ENCODE measurements at regions of chr6 and their contacts with region 1.

Region 1: GRCh38 chr6:16286148-16286522 is 47.7 kb downstream of the GMPR start:
- H3K4me3 ChIP-seq: no peak overlapping the region
- H3K27ac ChIP-seq: no peak overlapping the region
- H3K4me1 ChIP-seq: no peaks in the 10 kb centered on the region
- CTCF ChIP-seq: 0 out of 2 replicates have a peak, but pooled peaks have one; percentile 49

Region 2: DNA sequence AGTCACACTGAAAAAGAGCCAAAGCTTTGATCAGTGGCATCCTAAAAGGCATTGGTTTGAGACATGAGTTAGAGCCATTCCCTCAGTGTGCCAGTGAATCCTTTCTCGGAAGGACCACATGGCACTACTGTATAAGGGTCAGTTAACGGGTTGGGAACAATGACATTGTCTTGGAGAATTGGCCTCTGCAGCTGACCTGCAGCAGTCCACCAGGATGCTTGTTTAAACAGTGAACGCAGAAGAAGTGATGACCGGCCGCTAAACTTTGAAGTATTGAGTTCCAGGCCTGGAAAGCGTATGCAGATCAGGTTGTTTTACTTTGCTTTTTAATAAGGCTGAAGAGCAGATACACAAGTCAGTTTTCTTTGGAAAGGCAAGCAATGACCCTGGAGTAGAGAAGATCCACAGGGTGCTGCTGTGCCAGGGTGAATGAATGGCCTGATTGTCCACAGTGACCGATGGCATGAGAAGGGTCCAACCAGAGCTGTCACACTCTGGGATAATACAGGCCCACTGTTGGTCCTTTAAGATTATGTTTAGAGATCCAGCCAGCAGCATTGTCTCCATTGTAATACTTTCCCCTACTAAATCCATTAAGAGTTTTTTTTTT is 10.0 kb after region 1 on chr6:
- CTCF ChIA-PET with region 1: interaction called, 20 read pairs
- POLR2A ChIA-PET with region 1: no interaction called
- H3K4me3 ChIP-seq: no peak overlapping the region
- H3K27ac ChIP-seq: no peak overlapping the region
- H3K4me1 ChIP-seq: no peaks in the 10 kb centered on the region
- CTCF ChIP-seq: no peak

Region 3: GRCh38 chr6:16305246-16305725 is 19.2 kb after region 1 on chr6:
- CTCF ChIA-PET with region 1: interaction called, 20 read pairs
- POLR2A ChIA-PET with region 1: no interaction called
- H3K4me3 ChIP-seq: no peak overlapping the region
- H3K27ac ChIP-seq: no peak overlapping the region
- H3K4me1 ChIP-seq: no peaks in the 10 kb centered on the region
- CTCF ChIP-seq: no peak

Region 4: GRCh38 chr6:16344756-16345155 is 58.6 kb after region 1 on chr6:
- CTCF ChIA-PET with region 1: no interaction called
- POLR2A ChIA-PET with region 1: no interaction called
- H3K4me3 ChIP-seq: no peak overlapping the region
- H3K27ac ChIP-seq: no peak overlapping the region
- H3K4me1 ChIP-seq: peaks cover 9% of the 10 kb centered on the region
- CTCF ChIP-seq: no peak

Region 5: GRCh38 chr6:16380220-16380809 is 94.2 kb after region 1 on chr6:
- CTCF ChIA-PET with region 1: no interaction called
- POLR2A ChIA-PET with region 1: no interaction called
- H3K4me3 ChIP-seq: no peak overlapping the region
- H3K27ac ChIP-seq: no peak overlapping the region
- H3K4me1 ChIP-seq: no peaks in the 10 kb centered on the region
- CTCF ChIP-seq: no peak

Region 6: GRCh38 chr6:17086469-17086868 is 800.3 kb after region 1 on chr6:
- CTCF ChIA-PET with region 1: interaction called, 10 read pairs
- POLR2A ChIA-PET with region 1: no interaction called
- H3K4me3 ChIP-seq: no peak overlapping the region
- H3K27ac ChIP-seq: no peak overlapping the region
- H3K4me1 ChIP-seq: no peaks in the 10 kb centered on the region; the same call in 1 of the 2 replicates
- CTCF ChIP-seq: peak; percentile 55; the same call in 1 of the 2 replicates

Measured in HEK293 (cell line).